ENCODE measurements at regions of chr7 and their contacts with region 1.

Region 1: DNA sequence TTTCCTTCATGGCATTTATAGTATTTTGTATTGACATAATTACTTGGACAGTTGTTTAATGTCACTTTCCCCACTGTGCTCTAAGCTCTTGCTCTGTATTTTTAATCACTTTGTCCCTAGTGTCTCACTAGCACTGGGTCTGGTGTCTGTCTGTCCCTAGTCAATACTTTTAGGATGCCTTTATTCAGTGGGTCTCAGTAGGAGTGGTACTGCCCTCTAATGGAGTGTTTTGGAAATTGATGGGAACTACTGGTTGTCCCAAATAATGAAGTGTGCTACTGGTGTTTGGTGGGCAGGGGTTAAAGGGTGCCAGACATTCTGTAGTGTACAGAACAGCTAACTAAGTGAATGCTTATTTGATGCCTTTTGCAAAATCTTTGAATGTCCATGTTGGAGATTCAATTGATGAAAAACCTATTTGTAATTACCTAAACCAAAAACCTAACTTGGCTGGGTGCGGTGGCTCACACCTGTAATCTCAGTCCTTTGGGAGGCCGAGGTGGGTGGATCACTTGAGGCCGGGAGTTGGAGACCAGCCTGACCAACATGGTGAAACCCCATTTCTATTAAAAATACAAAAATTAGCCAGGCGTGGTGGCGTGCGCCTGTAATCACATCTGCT is 33.3 kb downstream of the CDK14 start:
- DNase-seq: peak; percentile 85
- H3K4me3 ChIP-seq: no peak overlapping the region
- H3K27ac ChIP-seq: no peak overlapping the region
- H3K4me1 ChIP-seq: peaks cover 48% of the 10 kb centered on the region
- H3K27me3 ChIP-seq: no peaks in the 10 kb centered on the region
- CTCF ChIP-seq: peak; percentile 79

Region 2: DNA sequence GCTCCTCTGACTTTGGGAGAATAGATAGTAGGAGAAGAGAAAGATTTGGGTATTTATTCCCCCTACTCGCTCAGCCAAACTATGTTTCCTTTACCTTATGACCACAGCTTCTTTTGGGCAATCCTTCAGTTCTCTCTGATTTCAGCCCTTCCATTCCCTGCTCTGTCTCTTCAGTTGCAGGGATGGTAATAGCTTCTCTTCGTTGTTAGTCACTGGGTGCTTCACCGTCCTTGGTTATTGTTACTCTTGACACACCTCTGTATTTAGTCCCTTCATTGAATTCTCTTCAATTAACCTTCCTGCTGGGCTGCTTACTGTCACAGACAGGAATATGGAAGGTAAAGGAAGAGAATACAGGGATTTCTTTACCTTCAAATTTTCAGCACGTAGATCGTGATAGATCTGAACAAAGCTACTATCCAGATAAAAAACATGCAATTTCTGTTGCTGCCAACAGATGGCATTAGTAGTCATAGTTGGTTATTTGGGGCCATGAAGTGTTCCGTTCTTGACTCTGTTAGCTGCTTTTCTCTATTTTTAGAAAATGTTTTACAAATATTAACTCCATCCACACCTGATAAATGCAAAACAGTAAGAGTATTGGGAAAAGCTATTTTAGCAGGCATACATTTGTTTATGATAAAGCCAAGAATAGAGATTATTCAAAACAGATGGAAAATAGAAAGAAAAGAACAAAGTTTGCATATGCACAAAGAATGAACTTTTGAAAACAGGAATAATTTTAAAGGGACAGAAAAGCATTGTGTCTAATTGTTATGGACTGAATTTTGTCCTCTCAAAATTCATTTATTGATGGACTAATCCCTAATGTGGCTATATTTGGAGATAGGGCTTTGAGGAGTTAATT is 174.0 kb before region 1 on chr7:
- CTCF ChIA-PET with region 1: interaction called, 6 read pairs
- POLR2A ChIA-PET with region 1: no interaction called
- intact Hi-C with region 1: loop called (anchors 5 kb)
- DNase-seq: peak; percentile 76
- H3K4me3 ChIP-seq: peak overlapping the region; percentile 11
- H3K27ac ChIP-seq: peak overlapping the region; percentile 9
- H3K4me1 ChIP-seq: peaks cover 12% of the 10 kb centered on the region
- H3K27me3 ChIP-seq: no peaks in the 10 kb centered on the region
- CTCF ChIP-seq: peak; percentile 82

Region 3: DNA sequence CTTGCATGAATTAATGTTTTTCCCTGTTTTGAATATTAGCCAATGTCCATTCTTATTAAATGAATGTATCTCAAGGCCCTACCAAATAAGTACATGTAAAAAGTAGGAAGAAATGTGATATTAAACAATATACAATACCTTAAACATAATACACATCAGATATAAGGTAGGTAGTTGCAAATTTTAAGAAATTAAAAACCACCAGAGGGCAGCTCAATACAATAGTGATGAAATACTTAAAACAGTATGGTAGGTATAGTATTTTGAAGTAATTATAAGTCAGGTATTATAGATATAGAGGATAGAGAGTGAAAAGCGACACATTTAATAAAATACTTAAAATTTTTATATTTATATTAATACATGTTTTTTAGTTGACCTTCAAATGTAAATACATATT is 76.9 kb before region 1 on chr7:
- CTCF ChIA-PET with region 1: no interaction called
- POLR2A ChIA-PET with region 1: no interaction called
- intact Hi-C with region 1: loop called (anchors 5 kb)
- DNase-seq: peak; percentile 17
- H3K4me3 ChIP-seq: no peak overlapping the region
- H3K27ac ChIP-seq: no peak overlapping the region
- H3K4me1 ChIP-seq: no peaks in the 10 kb centered on the region
- H3K27me3 ChIP-seq: no peaks in the 10 kb centered on the region
- CTCF ChIP-seq: peak; percentile 41; the same call in 1 of the 2 replicates

Region 4: GRCh38 chr7:90777465-90777864 is 148.1 kb after region 1 on chr7:
- CTCF ChIA-PET with region 1: no interaction called
- POLR2A ChIA-PET with region 1: no interaction called
- intact Hi-C with region 1: no loop called
- DNase-seq: no peak
- H3K4me3 ChIP-seq: no peak overlapping the region
- H3K27ac ChIP-seq: peak overlapping the region; percentile 91
- H3K4me1 ChIP-seq: peaks cover 35% of the 10 kb centered on the region
- H3K27me3 ChIP-seq: no peaks in the 10 kb centered on the region
- CTCF ChIP-seq: no peak

Region 5: GRCh38 chr7:90961037-90961725 is 331.8 kb after region 1 on chr7:
- CTCF ChIA-PET with region 1: no interaction called
- POLR2A ChIA-PET with region 1: no interaction called
- intact Hi-C with region 1: loop called (anchors 10 kb)
- DNase-seq: no peak
- H3K4me3 ChIP-seq: no peak overlapping the region
- H3K27ac ChIP-seq: no peak overlapping the region
- H3K4me1 ChIP-seq: peaks cover 38% of the 10 kb centered on the region
- H3K27me3 ChIP-seq: no peaks in the 10 kb centered on the region
- CTCF ChIP-seq: no peak

Measured in A673 (cell line).